Activated CD4-positive, alpha-beta T cell treated with anti-CD3 and anti-CD28 coated beads, Interleukin-2, amount 10 ng/mL, durations not matched to agents 24 days and 14 days (primary cell): ENCODE measurements at regions of chr6 and their contacts with region 1.

Region 1: DNA sequence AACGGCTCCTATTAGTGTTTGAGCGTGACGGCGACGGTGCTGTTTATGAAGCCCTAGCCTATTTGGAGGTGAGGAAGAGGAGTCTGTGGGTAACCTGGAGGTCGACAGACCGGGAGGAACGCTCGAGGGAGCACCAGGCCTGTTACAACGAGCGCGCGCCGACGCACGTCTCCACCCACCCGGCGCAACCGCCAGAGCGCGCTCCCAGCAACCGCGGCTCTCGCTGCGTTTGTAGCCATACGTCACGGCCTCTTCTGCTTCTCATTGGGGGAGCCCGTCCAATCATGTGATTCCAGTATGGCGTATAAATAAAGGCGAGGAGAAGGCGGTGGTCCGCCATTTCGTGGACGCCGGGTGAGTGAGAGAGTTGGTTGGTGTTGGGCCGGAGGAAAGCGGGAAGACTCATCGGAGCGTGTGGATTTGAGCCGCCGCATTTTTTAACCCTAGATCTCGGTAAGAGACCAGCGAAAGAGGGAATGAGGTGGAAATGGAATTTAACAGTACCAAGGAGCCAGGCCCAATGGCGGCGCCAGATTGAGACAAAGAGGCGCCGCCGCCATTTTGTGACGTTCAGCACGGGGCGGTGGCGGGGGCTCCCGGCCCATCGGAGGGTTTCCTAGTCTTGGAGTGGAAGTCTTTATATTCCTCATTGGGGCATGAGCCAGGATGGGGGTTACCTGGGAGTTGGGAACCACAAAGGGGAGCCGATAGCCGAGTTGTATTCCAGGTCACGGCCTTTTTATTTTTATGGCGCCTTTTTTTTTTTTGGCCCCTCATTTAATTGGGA is at the start of gene SRSF3:
- DNase-seq: peak; percentile 99
- H3K4me3 Mint-ChIP-seq: peak within 1 kb of the TSS; percentile 92
- H3K27ac Mint-ChIP-seq: peak within 1 kb of the TSS; percentile 98
- H3K4me1 Mint-ChIP-seq: peaks cover 32% of the 10 kb centered on the region
- H3K27me3 Mint-ChIP-seq: no peaks in the 10 kb centered on the region
- total RNA-seq, gene SRSF3: 532 and 572 TPM in 2 replicates

Region 2: GRCh38 chr6:36423101-36423824 is 171.0 kb before region 1 on chr6:
- intact Hi-C with region 1: loop called (anchors 2 kb)
- DNase-seq: peak; percentile 99
- H3K4me3 Mint-ChIP-seq: peak overlapping the region; percentile 88
- H3K27ac Mint-ChIP-seq: peak overlapping the region; percentile 87
- H3K4me1 Mint-ChIP-seq: peaks cover 15% of the 10 kb centered on the region
- H3K27me3 Mint-ChIP-seq: peaks cover 5% of the 10 kb centered on the region

Region 3: DNA sequence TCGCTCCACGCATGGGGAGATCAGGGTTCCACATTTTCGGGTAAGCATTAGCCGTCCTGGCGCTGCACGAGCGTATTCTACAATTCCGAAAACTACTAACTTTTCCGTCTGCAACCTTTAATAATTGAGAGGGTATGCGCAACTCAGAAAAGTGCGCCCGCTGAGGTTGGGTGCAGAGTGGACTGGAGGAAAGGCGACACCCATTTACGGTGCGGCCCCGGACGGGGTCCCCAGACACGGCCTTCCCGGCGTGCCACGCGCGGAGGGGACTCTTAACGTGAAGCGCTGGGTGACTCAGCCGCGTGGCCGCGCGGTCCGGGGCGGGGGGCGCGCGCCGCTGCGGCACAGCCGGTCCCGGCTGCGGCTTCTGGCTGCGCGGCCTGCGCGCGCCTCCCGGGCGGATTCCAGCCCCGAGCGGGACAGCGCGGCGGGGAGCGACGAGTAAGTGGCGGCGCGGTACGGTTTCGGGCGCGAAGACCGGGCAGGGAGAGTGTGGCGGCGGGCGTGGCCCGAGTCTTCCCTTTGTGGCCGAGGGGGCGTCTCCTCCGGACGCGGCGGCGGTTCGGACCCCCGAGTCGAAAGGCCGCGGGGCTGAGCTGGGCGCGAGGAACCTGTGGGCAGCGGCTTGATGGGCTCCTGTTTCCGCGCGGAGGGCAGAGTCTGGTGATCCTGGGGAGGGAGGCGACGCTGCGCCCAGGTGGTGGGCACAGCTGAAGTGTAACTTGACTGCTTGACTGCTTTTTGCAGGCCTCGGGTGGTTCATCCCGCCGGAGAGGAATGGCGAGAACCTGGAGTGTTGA is 151.4 kb before region 1 on chr6 and contains the starts of genes KCTD20 and PXT1:
- intact Hi-C with region 1: loop called (anchors 1 kb)
- DNase-seq: peak; percentile 96
- H3K4me3 Mint-ChIP-seq: peak within 1 kb of the TSS; percentile 96
- H3K27ac Mint-ChIP-seq: peak within 1 kb of the TSS; percentile 98
- H3K4me1 Mint-ChIP-seq: peaks cover 28% of the 10 kb centered on the region
- H3K27me3 Mint-ChIP-seq: no peaks in the 10 kb centered on the region
- total RNA-seq, gene KCTD20: 62.2 and 62.4 TPM in 2 replicates
- total RNA-seq, gene PXT1: 0.09 and 0.30 TPM in 2 replicates

Region 4: DNA sequence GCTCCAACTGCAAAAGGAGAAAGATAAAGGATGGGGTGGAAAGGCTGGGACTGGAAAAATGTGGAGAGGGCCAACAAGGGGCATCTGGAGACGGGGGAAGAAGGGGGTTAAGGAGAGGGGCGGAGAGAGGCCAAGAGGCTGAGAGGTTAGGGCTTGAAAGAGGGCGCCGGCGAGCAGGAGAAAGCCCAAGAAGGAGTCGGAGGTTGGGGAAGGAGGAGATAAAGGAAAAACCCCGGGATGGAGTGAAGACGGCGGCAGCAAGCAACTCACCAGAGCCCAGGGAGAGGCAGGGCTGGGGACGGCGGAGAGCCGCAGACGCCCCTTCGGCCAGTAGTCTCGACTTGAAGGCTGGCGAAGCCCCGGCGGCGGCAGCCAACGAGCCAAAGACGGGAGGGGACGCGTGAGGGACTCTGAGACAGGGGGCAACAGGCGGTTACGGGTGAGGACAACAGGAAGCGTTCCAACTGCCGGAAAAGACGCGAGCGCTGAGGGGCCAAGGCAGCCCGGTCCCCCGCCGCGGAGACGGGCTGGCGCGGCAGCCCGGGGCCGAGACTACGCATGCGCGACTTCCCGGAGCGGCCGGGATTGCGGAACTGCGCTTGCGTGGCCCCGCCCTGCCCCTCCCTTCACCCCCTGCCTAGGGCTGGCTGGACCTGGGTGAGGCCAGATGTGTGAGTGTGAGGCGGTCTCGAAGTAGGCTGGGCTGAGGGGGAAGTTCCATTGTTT is 47.1 kb before region 1 on chr6 and contains the start of gene STK38:
- intact Hi-C with region 1: loop called (anchors 1 kb)
- DNase-seq: peak; percentile 96
- H3K4me3 Mint-ChIP-seq: peak within 1 kb of the TSS; percentile 94
- H3K27ac Mint-ChIP-seq: peak within 1 kb of the TSS; percentile 92
- H3K4me1 Mint-ChIP-seq: peaks cover 37% of the 10 kb centered on the region
- H3K27me3 Mint-ChIP-seq: no peaks in the 10 kb centered on the region
- total RNA-seq, gene STK38: 20.7 and 21.5 TPM in 2 replicates

Region 5: DNA sequence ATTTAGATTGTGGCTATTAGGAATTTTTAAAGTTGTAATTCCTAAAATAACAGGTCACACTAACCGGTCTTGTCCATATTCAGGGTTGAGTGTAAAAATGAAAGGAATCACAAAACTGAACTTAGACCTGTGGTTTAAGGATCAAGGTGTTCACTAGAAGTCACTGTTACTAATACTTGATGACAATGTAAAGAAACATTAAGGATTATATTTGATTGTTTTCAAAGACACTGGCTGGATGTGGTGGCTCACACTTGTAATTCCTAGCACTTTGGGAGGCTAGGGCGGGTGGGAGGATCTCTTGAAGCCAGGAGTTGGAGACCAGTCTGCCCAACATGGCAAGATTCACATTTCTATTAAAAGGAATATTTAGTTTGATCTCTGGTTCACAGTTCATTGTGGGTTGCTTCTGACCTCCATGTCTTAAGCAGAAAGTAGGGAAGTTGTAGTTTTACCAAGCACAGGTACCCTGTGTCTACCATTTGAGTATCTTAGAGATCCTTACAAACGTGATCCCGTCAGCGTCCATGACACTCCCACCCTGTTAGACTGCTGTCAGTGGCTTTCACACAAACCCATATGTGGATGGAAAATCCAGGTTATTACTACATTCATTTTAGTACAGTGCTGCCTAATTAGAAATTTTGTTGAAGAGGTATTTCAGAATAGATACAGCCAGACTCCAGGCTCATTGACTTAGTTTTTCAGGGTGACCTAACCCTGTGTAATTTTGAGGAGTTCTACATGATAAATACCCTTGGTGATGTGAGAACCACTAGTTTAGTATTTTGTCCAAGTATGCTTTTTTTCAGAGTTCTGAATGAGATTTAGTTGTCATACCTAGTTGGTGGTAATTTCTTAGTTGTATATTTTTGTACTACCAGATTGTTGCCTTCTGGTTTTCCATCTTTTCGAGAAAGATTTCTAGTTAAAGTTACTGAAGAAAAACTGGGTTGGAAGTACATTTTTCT is 10.2 kb after region 1 on chr6:
- intact Hi-C with region 1: loop called (anchors 1 kb)
- DNase-seq: no peak
- H3K4me3 Mint-ChIP-seq: no peak overlapping the region
- H3K27ac Mint-ChIP-seq: peak overlapping the region; percentile 53
- H3K4me1 Mint-ChIP-seq: peaks cover 60% of the 10 kb centered on the region
- H3K27me3 Mint-ChIP-seq: no peaks in the 10 kb centered on the region